ENCODE measurements at regions of chr19 and their contacts with region 1.

Region 1: GRCh38 chr19:35352448-35353304 is 5.0 kb downstream of the FFAR1 start:
- DNase-seq: peak; percentile 78 to 83
- H3K4me3 ChIP-seq: no peak overlapping the region
- H3K4me3 Mint-ChIP-seq: no peak overlapping the region
- H3K27ac Mint-ChIP-seq: no peak overlapping the region
- H3K4me1 ChIP-seq: no peaks in the 10 kb centered on the region
- H3K4me1 Mint-ChIP-seq: peaks cover 8% of the 10 kb centered on the region
- H3K27me3 ChIP-seq: no peaks in the 10 kb centered on the region
- H3K27me3 Mint-ChIP-seq: no peaks in the 10 kb centered on the region
- CTCF ChIP-seq: peak; percentile 90 to 94

Region 2: DNA sequence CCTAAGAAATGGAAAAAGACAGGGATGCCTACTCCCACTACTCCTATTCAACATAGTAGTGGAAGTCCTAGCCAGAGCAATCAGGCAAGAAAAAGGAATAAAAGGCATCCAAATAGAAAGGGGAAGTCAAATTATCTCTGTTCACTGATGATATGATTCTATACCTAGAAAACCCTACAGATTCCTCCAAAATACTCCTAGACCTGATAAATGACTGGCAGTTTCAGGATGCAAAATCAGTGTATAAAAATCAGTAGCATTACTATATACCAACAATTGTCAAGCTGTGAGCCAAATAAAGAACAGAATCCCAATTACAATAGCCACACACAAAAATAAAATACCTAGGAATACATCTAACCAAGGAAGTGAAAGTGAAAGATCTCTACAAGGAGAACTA is 16.8 kb after region 1 on chr19:
- CTCF ChIA-PET with region 1: no interaction called
- POLR2A ChIA-PET with region 1: no interaction called
- intact Hi-C with region 1: no loop called
- DNase-seq: no peak
- H3K4me3 ChIP-seq: no peak overlapping the region
- H3K4me3 Mint-ChIP-seq: no peak overlapping the region
- H3K27ac Mint-ChIP-seq: no peak overlapping the region
- H3K4me1 ChIP-seq: no peaks in the 10 kb centered on the region
- H3K4me1 Mint-ChIP-seq: no peaks in the 10 kb centered on the region
- H3K27me3 ChIP-seq: no peaks in the 10 kb centered on the region
- H3K27me3 Mint-ChIP-seq: peaks cover 4% of the 10 kb centered on the region
- CTCF ChIP-seq: no peak

Region 3: GRCh38 chr19:35380450-35381124 is 27.9 kb after region 1 on chr19:
- CTCF ChIA-PET with region 1: interaction called, 6 read pairs
- POLR2A ChIA-PET with region 1: no interaction called
- intact Hi-C with region 1: loop called (anchors 2 kb)
- DNase-seq: peak; percentile 74 to 80
- H3K4me3 ChIP-seq: no peak overlapping the region
- H3K4me3 Mint-ChIP-seq: peak overlapping the region; percentile 49
- H3K27ac Mint-ChIP-seq: peak overlapping the region; percentile 80
- H3K4me1 ChIP-seq: peaks cover 17% of the 10 kb centered on the region
- H3K4me1 Mint-ChIP-seq: peaks cover 25% of the 10 kb centered on the region
- H3K27me3 ChIP-seq: no peaks in the 10 kb centered on the region
- H3K27me3 Mint-ChIP-seq: no peaks in the 10 kb centered on the region
- CTCF ChIP-seq: no peak

Region 4: GRCh38 chr19:35427187-35427586 is 74.5 kb after region 1 on chr19:
- CTCF ChIA-PET with region 1: interaction called, 4 read pairs
- POLR2A ChIA-PET with region 1: no interaction called
- intact Hi-C with region 1: loop called (anchors 2 kb)
- DNase-seq: peak; percentile 63 to 78
- H3K4me3 ChIP-seq: no peak overlapping the region
- H3K4me3 Mint-ChIP-seq: peak overlapping the region; percentile 48
- H3K27ac Mint-ChIP-seq: peak overlapping the region; percentile 93
- H3K4me1 ChIP-seq: peaks cover 46% of the 10 kb centered on the region
- H3K4me1 Mint-ChIP-seq: peaks cover 25% of the 10 kb centered on the region
- H3K27me3 ChIP-seq: no peaks in the 10 kb centered on the region
- H3K27me3 Mint-ChIP-seq: no peaks in the 10 kb centered on the region
- CTCF ChIP-seq: no peak

Region 5: DNA sequence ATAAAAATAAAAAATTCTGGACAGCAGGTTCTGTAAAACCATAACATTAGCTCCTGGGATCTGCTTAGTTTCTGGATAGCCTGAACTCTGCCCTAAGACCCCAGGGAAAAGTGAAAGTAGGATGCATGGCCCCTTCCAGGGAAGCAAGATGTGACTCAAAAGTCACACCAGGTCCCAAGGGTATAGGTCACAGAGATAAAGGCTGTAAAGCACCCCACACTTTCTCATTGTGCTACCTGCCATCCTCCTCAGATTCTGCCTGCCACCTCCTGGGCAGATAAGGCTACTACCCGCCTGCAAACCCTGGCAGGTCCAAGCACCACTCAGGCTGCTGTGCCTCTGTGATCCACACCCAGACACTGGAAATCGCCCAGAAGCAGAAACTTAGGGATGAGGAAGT is 116.0 kb after region 1 on chr19:
- CTCF ChIA-PET with region 1: interaction called, 26 read pairs
- POLR2A ChIA-PET with region 1: no interaction called
- intact Hi-C with region 1: loop called (anchors 1 kb)
- DNase-seq: peak; percentile 74 to 80
- H3K4me3 ChIP-seq: no peak overlapping the region
- H3K4me3 Mint-ChIP-seq: no peak overlapping the region
- H3K27ac Mint-ChIP-seq: no peak overlapping the region
- H3K4me1 ChIP-seq: peaks cover 10% of the 10 kb centered on the region
- H3K4me1 Mint-ChIP-seq: no peaks in the 10 kb centered on the region
- H3K27me3 ChIP-seq: no peaks in the 10 kb centered on the region
- H3K27me3 Mint-ChIP-seq: no peaks in the 10 kb centered on the region
- CTCF ChIP-seq: peak; percentile 79 to 94

Region 6: GRCh38 chr19:35495107-35496064 is 142.7 kb after region 1 on chr19:
- CTCF ChIA-PET with region 1: interaction called, 33 read pairs
- POLR2A ChIA-PET with region 1: no interaction called
- intact Hi-C with region 1: loop called (anchors 1 kb)
- DNase-seq: peak; percentile 72 to 78
- H3K4me3 ChIP-seq: 0 out of 2 replicates have a peak overlapping the region, but pooled peaks have one; percentile 4
- H3K4me3 Mint-ChIP-seq: peak overlapping the region; percentile 39
- H3K27ac Mint-ChIP-seq: peak overlapping the region; percentile 16
- H3K4me1 ChIP-seq: peaks cover 8% of the 10 kb centered on the region
- H3K4me1 Mint-ChIP-seq: no peaks in the 10 kb centered on the region
- H3K27me3 ChIP-seq: no peaks in the 10 kb centered on the region
- H3K27me3 Mint-ChIP-seq: no peaks in the 10 kb centered on the region
- CTCF ChIP-seq: peak; percentile 96 to 98